Heart right ventricle (tissue), 16 donors: ENCODE measurements at regions of chr18 and their contacts with region 1.

Region 1: DNA sequence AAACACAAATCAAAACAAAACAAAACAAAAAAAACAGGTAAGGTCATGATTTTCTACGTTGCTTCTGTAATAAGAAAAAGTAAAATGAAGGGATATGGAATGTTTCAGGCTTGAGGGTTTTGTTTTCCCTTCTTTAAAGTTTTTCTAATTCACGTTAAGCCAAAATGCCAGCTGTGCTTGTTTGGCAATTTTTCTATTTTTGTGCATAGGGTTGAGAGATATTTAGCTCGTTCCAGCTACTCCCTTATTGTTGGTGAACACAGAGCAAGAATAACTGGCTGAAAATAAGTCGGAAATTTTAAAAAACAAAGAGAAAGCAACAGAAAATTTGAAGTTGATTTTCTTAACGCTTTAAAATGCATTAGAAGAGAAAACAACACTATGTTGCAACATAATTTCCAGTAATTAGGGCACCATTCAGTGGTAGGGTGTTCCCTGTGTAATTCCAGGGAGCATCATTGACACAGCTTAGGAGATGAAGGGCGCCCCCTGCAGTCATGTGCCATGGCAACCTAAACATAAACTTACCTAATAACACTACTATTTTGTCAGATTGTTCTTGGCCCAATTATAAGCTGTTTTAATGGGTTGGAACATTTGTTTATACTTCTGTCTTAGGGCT is 99.5 kb downstream of the DTNA start:
- DNase-seq: peak; percentile 29 to 41
- ATAC-seq: peak in 5 of 8 donors; percentile 34 to 70 (median 51)
- H3K4me3 ChIP-seq: no peak overlapping the region
- H3K27ac ChIP-seq: no peak overlapping the region
- H3K4me1 ChIP-seq: peaks cover 0 to 23% (median 6%) of the 10 kb centered on the region in 9 donors
- H3K27me3 ChIP-seq: no peaks in the 10 kb centered on the region
- CTCF ChIP-seq: peak; percentile 17 to 58 (median 47)

Region 2: GRCh38 chr18:34122724-34123334 is 686.7 kb before region 1 on chr18:
- intact Hi-C with region 1: loop called in 1 of 10 experiments (anchors 10 kb)
- DNase-seq: peak in 1 of 2 donors; percentile 7
- ATAC-seq: peak in 1 of 8 donors; percentile 61
- H3K4me3 ChIP-seq: no peak overlapping the region
- H3K27ac ChIP-seq: no peak overlapping the region
- H3K4me1 ChIP-seq: no peaks in the 10 kb centered on the region
- H3K27me3 ChIP-seq: no peaks in the 10 kb centered on the region
- CTCF ChIP-seq: peak; percentile 46 to 93 (median 79)

Region 3: DNA sequence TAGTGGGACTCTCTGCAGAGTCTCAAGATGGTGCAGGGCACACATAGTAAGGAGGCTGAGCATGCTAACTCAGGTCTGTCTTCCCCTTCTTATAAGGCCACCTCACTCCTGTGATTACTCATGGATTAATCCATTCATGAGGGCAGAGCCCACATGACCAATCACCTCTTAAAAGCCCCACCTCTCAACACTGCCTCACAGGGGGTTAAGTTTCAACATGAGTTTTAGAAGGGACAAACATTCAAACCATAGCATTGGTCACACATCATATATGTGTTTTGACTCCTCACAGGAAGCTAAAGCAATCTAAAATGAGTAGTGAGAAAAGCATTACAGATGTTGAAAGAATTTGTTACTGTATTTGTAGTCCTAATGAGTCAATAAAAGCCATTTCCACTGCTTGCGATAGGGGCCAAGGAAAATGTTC is 41.9 kb before region 1 on chr18:
- intact Hi-C with region 1: no loop called
- DNase-seq: no peak
- ATAC-seq: no peak
- H3K4me3 ChIP-seq: no peak overlapping the region
- H3K27ac ChIP-seq: no peak overlapping the region
- H3K4me1 ChIP-seq: peaks cover 0 to 11% (median 4%) of the 10 kb centered on the region in 9 donors
- H3K27me3 ChIP-seq: no peaks in the 10 kb centered on the region
- CTCF ChIP-seq: no peak

Region 4: DNA sequence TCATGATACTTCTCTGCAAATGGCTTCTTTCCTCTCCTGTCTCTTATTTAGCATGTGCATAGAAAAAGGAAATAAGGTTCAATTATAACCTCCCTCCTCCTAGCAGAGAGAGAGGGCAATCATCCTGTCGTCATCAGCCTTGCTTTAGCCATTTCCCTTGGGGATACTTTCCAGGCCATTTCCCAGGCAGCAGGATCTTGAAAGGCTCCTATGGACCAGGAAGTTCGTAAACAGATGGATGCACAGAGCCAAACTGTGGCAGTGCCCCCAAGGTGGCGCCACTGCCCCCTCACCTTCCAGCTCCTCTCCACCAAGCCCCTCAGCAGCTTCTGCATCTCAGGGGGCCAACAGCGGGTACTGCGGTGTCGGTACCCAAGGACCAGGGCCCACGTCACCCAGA is 58.0 kb after region 1 on chr18:
- intact Hi-C with region 1: no loop called
- DNase-seq: peak; percentile 16 to 41
- ATAC-seq: peak; percentile 48 to 86 (median 70)
- H3K4me3 ChIP-seq: no peak overlapping the region
- H3K27ac ChIP-seq: peak overlapping the region in 8 of 10 donors; percentile 20 to 59 (median 34)
- H3K4me1 ChIP-seq: peaks cover 0 to 30% (median 10%) of the 10 kb centered on the region in 9 donors
- H3K27me3 ChIP-seq: no peaks in the 10 kb centered on the region
- CTCF ChIP-seq: peak in 7 of 9 donors; percentile 13 to 45 (median 35)

Region 5: GRCh38 chr18:34999756-35000289 is 190.3 kb after region 1 on chr18:
- intact Hi-C with region 1: no loop called
- DNase-seq: no peak
- ATAC-seq: peak in 6 of 8 donors; percentile 38 to 66 (median 54)
- H3K4me3 ChIP-seq: no peak overlapping the region
- H3K27ac ChIP-seq: no peak overlapping the region
- H3K4me1 ChIP-seq: peaks cover 0 to 4% (median 0%) of the 10 kb centered on the region in 9 donors
- H3K27me3 ChIP-seq: no peaks in the 10 kb centered on the region
- CTCF ChIP-seq: no peak